Activated T-helper 2 cell treated with anti-CD3 and anti-CD28 coated beads, Interferon-gamma antibody, Interleukin-2, Interleukin-4, amounts not matched to agents 10 μg/mL and 5 μg/mL and 100 μg/mL, durations not matched to agents 14 hours and 24 hours and 36 hours (primary cell): ENCODE measurements at regions of chr2 and their contacts with region 1.

Region 1: DNA sequence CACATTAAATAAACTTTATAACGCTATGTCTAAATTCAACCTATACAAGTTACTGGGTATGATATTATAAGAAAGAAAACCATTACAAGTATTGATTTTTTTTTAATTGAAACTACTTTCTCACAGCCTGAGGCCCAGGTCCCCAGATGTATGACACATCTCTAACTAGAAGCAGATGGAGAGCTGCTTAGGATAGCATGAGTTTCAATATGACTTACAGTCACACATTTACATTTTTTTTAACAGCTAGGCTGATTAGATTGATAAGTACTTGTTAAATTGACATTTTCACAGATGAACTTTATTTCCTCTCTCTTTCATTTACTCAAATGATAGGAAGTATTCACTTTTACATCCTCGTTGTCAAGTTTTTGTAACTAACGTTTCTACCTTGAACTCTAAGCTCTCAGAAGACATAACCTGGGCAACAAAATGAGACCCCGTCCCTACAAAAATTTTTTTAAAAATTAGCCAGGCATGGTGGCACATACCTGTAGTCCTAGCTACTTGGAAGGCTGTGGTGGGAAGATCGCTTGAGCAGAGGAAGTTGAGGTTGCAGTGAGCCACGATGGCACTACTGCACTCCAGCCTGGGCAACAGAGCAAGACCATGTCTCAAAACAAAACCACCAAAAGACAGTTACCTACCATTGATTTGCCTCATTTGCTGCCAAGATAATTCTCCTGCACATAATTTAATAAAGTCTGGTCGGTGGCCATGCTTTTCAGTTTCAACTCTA is 52.4 kb downstream of the STK39 start:
- DNase-seq: peak; percentile 45
- H3K4me3 Mint-ChIP-seq: peak overlapping the region; percentile 69
- H3K27ac Mint-ChIP-seq: peak overlapping the region; percentile 91
- H3K4me1 Mint-ChIP-seq: peaks cover 74% of the 10 kb centered on the region
- H3K27me3 Mint-ChIP-seq: no peaks in the 10 kb centered on the region

Region 2: DNA sequence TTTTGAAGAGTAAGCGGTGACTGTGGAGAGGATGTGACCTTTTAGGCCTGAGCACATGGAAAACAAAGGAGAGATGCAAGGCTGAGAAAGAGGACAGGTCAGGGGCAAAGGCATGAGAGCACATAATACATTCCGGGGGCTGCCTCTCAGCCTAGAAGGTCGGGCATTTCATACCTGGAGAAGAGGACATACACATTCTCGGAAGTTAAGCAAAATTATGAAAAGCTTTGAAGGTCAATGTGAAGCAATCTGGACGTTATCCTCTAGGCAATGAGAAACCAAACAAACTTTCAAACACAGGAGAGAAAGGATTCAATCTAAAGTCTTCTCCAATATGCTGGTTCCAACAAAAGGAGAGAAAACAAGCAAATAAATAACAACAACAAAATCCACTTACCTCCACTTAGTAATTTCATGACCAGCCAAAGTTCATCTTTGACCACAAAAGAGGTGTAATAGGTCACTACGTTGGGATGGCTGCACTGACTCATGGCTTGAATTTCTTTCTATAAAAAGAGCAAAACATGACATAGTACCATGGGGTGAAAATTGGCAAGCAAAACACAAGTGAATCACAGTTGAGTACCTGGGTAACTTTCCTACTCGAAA is 27.9 kb before region 1 on chr2:
- intact Hi-C with region 1: loop called (anchors 1 kb)
- DNase-seq: no peak
- H3K4me3 Mint-ChIP-seq: peak overlapping the region; percentile 22
- H3K27ac Mint-ChIP-seq: peak overlapping the region; percentile 86
- H3K4me1 Mint-ChIP-seq: peaks cover 45% of the 10 kb centered on the region
- H3K27me3 Mint-ChIP-seq: no peaks in the 10 kb centered on the region

Region 3: GRCh38 chr2:168184681-168185513 is 10.1 kb before region 1 on chr2:
- intact Hi-C with region 1: loop called (anchors 1 kb)
- DNase-seq: no peak
- H3K4me3 Mint-ChIP-seq: no peak overlapping the region
- H3K27ac Mint-ChIP-seq: no peak overlapping the region
- H3K4me1 Mint-ChIP-seq: peaks cover 61% of the 10 kb centered on the region
- H3K27me3 Mint-ChIP-seq: no peaks in the 10 kb centered on the region

Region 4: GRCh38 chr2:168233762-168234406 is 38.9 kb after region 1 on chr2:
- intact Hi-C with region 1: loop called (anchors 1 kb)
- DNase-seq: no peak
- H3K4me3 Mint-ChIP-seq: no peak overlapping the region
- H3K27ac Mint-ChIP-seq: peak overlapping the region; percentile 63
- H3K4me1 Mint-ChIP-seq: peaks cover 35% of the 10 kb centered on the region
- H3K27me3 Mint-ChIP-seq: no peaks in the 10 kb centered on the region

Region 5: DNA sequence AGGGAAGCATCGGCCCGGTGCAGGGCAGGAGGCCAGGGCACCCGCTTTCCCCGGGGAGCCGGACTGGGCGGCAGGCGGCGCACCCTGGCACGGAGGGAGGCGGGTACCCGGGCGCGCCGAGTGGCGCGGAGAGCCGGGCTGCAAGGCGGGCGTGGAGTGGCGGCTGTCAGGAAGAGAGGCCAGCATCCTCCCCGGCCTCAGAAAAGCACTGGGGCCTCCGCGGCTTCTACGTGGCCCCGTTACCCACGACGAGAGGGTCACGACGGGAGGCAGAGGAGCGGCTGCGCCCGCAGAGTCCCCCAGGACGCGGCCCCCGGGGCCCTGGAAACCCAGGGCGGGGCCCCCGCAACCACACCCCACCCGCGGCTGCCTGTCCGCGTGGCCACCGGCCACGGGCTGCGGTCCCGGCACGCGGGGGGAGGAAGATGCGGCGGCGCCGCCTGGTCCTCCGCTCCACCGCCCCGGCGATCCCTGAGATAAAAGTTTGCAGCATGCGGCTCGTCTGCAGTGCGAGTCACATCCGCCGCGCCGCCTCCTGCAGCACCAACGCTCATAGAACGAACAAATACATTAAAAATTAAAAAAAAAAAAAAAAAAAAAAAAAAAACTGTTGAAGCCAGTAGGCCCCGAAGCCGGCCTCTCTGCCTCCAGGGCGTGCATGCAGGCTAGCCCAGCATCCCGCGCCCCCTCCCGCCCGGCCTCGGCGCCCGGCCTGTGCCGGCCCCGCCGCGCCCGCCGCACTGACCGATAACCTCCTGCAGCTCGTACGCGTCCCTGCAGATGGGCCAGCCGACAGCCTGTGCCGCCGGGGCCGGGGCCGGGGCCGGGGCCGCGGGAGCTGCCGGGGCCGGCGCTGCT is 51.8 kb after region 1 on chr2:
- intact Hi-C with region 1: loop called (anchors 1 kb)
- DNase-seq: peak; percentile 83
- H3K4me3 Mint-ChIP-seq: peak overlapping the region; percentile 93
- H3K27ac Mint-ChIP-seq: peak overlapping the region; percentile 94
- H3K4me1 Mint-ChIP-seq: peaks cover 42% of the 10 kb centered on the region
- H3K27me3 Mint-ChIP-seq: no peaks in the 10 kb centered on the region